ENCODE measurements at regions of chr3 and their contacts with region 1.

Region 1: GRCh38 chr3:129627429-129628168 is 21.1 kb upstream of the PLXND1 start:
- DNase-seq: peak; percentile 80
- ATAC-seq: peak; percentile 59
- H3K4me3 Mint-ChIP-seq: peak overlapping the region; percentile 89
- H3K27ac Mint-ChIP-seq: peak overlapping the region; percentile 94
- H3K4me1 Mint-ChIP-seq: peaks cover 24% of the 10 kb centered on the region
- H3K27me3 Mint-ChIP-seq: no peaks in the 10 kb centered on the region
- CTCF ChIP-seq: 0 out of 2 replicates have a peak, but pooled peaks have one; percentile 14

Region 2: GRCh38 chr3:129606636-129607390 is 20.8 kb before region 1 on chr3 and contains the start of gene PLXND1:
- CTCF ChIA-PET with region 1: interaction called, 13 read pairs
- POLR2A ChIA-PET with region 1: no interaction called
- DNase-seq: peak; percentile 63
- ATAC-seq: peak; percentile 50
- H3K4me3 Mint-ChIP-seq: peak within 1 kb of the TSS; percentile 90
- H3K27ac Mint-ChIP-seq: peak within 1 kb of the TSS; percentile 63; the same call in 1 of the 2 replicates
- H3K4me1 Mint-ChIP-seq: peaks cover 63% of the 10 kb centered on the region
- H3K27me3 Mint-ChIP-seq: peaks cover 39% of the 10 kb centered on the region
- CTCF ChIP-seq: no peak
- total RNA-seq, gene PLXND1: 56.7 to 63.9 TPM (median 57.4 TPM) in 3 replicates

Region 3: GRCh38 chr3:129650256-129650872 is 22.8 kb after region 1 on chr3:
- CTCF ChIA-PET with region 1: interaction called, 14 read pairs
- POLR2A ChIA-PET with region 1: no interaction called
- DNase-seq: peak; percentile 81
- ATAC-seq: peak; percentile 74
- H3K4me3 Mint-ChIP-seq: no peak overlapping the region
- H3K27ac Mint-ChIP-seq: peak overlapping the region; percentile 54; the same call in 1 of the 2 replicates
- H3K4me1 Mint-ChIP-seq: peaks cover 48% of the 10 kb centered on the region
- H3K27me3 Mint-ChIP-seq: no peaks in the 10 kb centered on the region
- CTCF ChIP-seq: no peak; the same call in none of the 2 replicates

Region 4: GRCh38 chr3:129673882-129674797 is 46.5 kb after region 1 on chr3:
- CTCF ChIA-PET with region 1: no interaction called
- POLR2A ChIA-PET with region 1: no interaction called
- DNase-seq: no peak
- ATAC-seq: no peak
- H3K4me3 Mint-ChIP-seq: no peak overlapping the region
- H3K27ac Mint-ChIP-seq: no peak overlapping the region
- H3K4me1 Mint-ChIP-seq: no peaks in the 10 kb centered on the region
- H3K27me3 Mint-ChIP-seq: no peaks in the 10 kb centered on the region
- CTCF ChIP-seq: no peak

Region 5: DNA sequence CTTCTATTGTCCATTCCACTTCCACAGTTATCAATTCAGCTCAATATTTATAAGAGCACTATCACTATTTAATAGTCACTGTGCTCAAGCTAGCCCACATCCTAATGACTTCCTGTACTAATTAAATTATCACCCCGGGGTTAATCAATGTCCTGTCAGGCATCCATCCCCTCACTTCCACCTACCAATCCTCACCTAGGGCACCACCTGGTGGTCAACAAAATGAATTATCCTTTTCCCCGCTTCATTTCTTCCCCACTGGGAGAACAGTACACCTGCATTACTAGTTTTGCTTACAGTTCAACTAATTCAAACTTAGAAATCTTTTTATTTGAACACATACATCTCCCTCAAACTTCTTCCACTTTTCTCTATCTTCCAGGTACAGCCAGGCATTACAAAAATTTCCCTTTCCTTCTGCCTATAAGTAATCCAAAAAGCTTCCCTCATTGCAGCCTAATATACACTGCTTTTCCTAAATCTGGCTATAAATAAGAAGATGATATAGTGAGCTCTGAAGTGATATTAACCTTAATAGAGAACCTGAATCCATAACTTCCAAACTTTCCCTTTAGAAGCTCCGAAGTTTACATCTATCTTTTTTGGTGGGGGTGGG is 197.4 kb after region 1 on chr3:
- CTCF ChIA-PET with region 1: interaction called, 24 read pairs
- POLR2A ChIA-PET with region 1: no interaction called
- DNase-seq: peak; percentile 57
- ATAC-seq: peak; percentile 76
- H3K4me3 Mint-ChIP-seq: no peak overlapping the region
- H3K27ac Mint-ChIP-seq: no peak overlapping the region
- H3K4me1 Mint-ChIP-seq: peaks cover 11% of the 10 kb centered on the region
- H3K27me3 Mint-ChIP-seq: no peaks in the 10 kb centered on the region
- CTCF ChIP-seq: peak; percentile 63

Measured in WTC11 (cell line).